Activated B cell treated with CpG ODN at 0.5 μM for 24 hours (primary cell): ENCODE measurements at regions of chr6 and their contacts with region 1.

Region 1: GRCh38 chr6:150079604-150080003 is 10.7 kb upstream of the ULBP3 start:
- DNase-seq: no peak
- ATAC-seq: no peak
- H3K4me3 Mint-ChIP-seq: no peak overlapping the region
- H3K27ac Mint-ChIP-seq: no peak overlapping the region
- H3K4me1 Mint-ChIP-seq: peaks cover 2% of the 10 kb centered on the region
- H3K27me3 Mint-ChIP-seq: peaks cover 48% of the 10 kb centered on the region
- CTCF ChIP-seq: no peak

Region 2: DNA sequence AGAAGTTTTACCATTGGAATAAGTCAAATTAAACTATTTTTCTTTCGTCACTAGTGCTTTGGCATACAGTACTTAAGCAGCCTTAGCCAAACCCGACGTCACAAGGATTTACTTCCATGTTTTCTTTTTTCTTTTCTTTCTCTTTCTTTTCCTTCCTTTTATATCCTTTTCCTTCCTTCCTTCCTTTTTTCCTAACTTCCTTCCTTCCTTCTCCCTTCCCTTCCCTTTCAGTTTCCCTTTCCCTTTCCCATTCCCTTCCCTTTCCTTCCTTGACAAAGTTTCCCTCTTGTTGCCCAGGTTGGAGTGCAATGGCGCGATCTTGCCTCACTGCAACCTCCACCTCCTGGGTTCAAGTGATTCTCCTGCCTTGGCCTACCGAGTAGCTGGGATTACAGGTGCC is 20.6 kb before region 1 on chr6:
- CTCF ChIA-PET with region 1: no interaction called
- POLR2A ChIA-PET with region 1: no interaction called
- intact Hi-C with region 1: no loop called
- DNase-seq: no peak
- ATAC-seq: no peak
- H3K4me3 Mint-ChIP-seq: no peak overlapping the region
- H3K27ac Mint-ChIP-seq: no peak overlapping the region
- H3K4me1 Mint-ChIP-seq: peaks cover 8% of the 10 kb centered on the region
- H3K27me3 Mint-ChIP-seq: peaks cover 20% of the 10 kb centered on the region
- CTCF ChIP-seq: no peak

Region 3: GRCh38 chr6:150334790-150335783 is 255.5 kb after region 1 on chr6:
- CTCF ChIA-PET with region 1: interaction called, 56 read pairs
- POLR2A ChIA-PET with region 1: no interaction called
- intact Hi-C with region 1: loop called (anchors 1 kb)
- DNase-seq: no peak
- ATAC-seq: peak; percentile 45
- H3K4me3 Mint-ChIP-seq: no peak overlapping the region
- H3K27ac Mint-ChIP-seq: no peak overlapping the region
- H3K4me1 Mint-ChIP-seq: no peaks in the 10 kb centered on the region
- H3K27me3 Mint-ChIP-seq: peaks cover 11% of the 10 kb centered on the region
- CTCF ChIP-seq: peak; percentile 68